H1 (cell line): ENCODE measurements at regions of chr1 and their contacts with region 1.

Region 1: GRCh38 chr1:1122078-1122811 is 6.4 kb upstream of the C1orf159 start:
- DNase-seq: peak; percentile 47 to 94
- H3K4me3 ChIP-seq: no peak overlapping the region
- H3K27ac ChIP-seq: no peak overlapping the region
- H3K4me1 ChIP-seq: peaks cover 0 to 3% (median 2%) of the 10 kb centered on the region in 4 experiments; a peak in 4 of 7 replicates
- H3K27me3 ChIP-seq: peaks cover 2 to 16% (median 13%) of the 10 kb centered on the region in 4 experiments; a peak in 6 of 7 replicates
- CTCF ChIP-seq: peak in 2 of 3 experiments; percentile 91 to 95; a peak in 3 of 4 replicates
- EP300 ChIP-seq: no peak
- POLR2A ChIP-seq: no peak
- RAD21 ChIP-seq: peak; percentile 97 to 98

Region 2: DNA sequence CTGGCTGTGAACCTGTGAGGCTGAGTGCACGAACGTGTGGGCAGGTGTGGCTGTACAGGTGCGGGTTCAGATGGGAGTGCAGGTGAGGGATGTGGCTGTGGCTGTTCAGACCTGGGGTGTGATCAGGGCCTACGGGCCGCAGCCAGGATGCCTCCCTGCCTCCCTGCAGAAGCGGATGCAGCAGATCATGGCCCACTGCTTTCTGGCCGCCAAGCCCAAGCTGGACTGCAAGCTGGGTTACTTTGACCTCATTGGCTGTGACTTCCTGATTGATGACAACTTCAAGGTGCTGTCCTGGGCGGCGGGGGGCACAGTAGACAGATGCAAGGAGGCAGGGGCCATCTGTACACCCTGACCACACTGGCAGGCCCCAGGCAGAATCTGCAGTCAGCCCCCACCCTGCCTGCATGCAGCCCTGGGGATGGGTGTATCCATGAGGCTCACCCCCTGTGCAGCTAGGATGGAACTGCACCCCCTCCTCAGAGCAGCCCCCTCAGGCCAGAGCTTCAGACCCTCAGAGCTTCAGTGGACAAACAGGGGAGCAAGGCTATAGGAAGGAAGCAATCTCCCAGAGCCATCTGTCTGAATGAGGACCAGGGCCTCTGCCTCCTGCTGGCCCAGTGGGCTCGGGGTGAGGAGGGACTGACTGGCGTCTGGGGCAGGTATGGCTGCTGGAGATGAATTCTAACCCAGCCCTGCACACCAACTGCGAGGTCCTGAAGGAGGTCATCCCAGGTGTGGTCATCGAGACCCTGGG is 74.4 kb after region 1 on chr1:
- CTCF ChIA-PET with region 1: interaction called, 14 read pairs
- POLR2A ChIA-PET with region 1: no interaction called
- DNase-seq: no peak
- H3K4me3 ChIP-seq: no peak overlapping the region
- H3K27ac ChIP-seq: no peak overlapping the region
- H3K4me1 ChIP-seq: peaks cover 0 to 4% (median under 1%) of the 10 kb centered on the region in 4 experiments; a peak in 4 of 7 replicates
- H3K27me3 ChIP-seq: peaks cover 0 to 3% (median 1%) of the 10 kb centered on the region in 4 experiments; a peak in 4 of 7 replicates
- CTCF ChIP-seq: no peak
- EP300 ChIP-seq: no peak
- POLR2A ChIP-seq: no peak
- RAD21 ChIP-seq: no peak

Region 3: GRCh38 chr1:1217621-1218523 is 95.6 kb after region 1 on chr1:
- CTCF ChIA-PET with region 1: interaction called, 28 read pairs
- POLR2A ChIA-PET with region 1: interaction called, 3 read pairs
- DNase-seq: no peak
- H3K4me3 ChIP-seq: no peak overlapping the region
- H3K27ac ChIP-seq: no peak overlapping the region
- H3K4me1 ChIP-seq: no peaks in the 10 kb centered on the region; a peak in 1 of 7 replicates
- H3K27me3 ChIP-seq: no peaks in the 10 kb centered on the region
- CTCF ChIP-seq: no peak
- EP300 ChIP-seq: no peak
- POLR2A ChIP-seq: no peak
- RAD21 ChIP-seq: no peak

Region 4: GRCh38 chr1:1225238-1225845 is 103.1 kb after region 1 on chr1:
- CTCF ChIA-PET with region 1: interaction called, 28 read pairs
- POLR2A ChIA-PET with region 1: interaction called, 3 read pairs
- DNase-seq: no peak
- H3K4me3 ChIP-seq: no peak overlapping the region
- H3K27ac ChIP-seq: no peak overlapping the region
- H3K4me1 ChIP-seq: no peaks in the 10 kb centered on the region
- H3K27me3 ChIP-seq: no peaks in the 10 kb centered on the region
- CTCF ChIP-seq: no peak
- EP300 ChIP-seq: no peak
- POLR2A ChIP-seq: no peak
- RAD21 ChIP-seq: no peak

Region 5: GRCh38 chr1:1250786-1251284 is 128.6 kb after region 1 on chr1:
- CTCF ChIA-PET with region 1: interaction called, 39 read pairs
- POLR2A ChIA-PET with region 1: no interaction called
- DNase-seq: no peak
- H3K4me3 ChIP-seq: no peak overlapping the region
- H3K27ac ChIP-seq: no peak overlapping the region
- H3K4me1 ChIP-seq: peaks cover 0 to 8% (median under 1%) of the 10 kb centered on the region in 4 experiments; a peak in 5 of 7 replicates
- H3K27me3 ChIP-seq: peaks cover 2 to 16% (median 10%) of the 10 kb centered on the region in 4 experiments; a peak in 6 of 7 replicates
- CTCF ChIP-seq: no peak
- EP300 ChIP-seq: no peak
- POLR2A ChIP-seq: no peak
- RAD21 ChIP-seq: no peak

Region 6: GRCh38 chr1:1399187-1399871 is 277.1 kb after region 1 on chr1 and contains the start of gene CCNL2:
- CTCF ChIA-PET with region 1: no interaction called
- POLR2A ChIA-PET with region 1: no interaction called
- DNase-seq: peak; percentile 94 to 99
- H3K4me3 ChIP-seq: peak within 1 kb of the TSS; percentile 93 to 95 (median 94)
- H3K27ac ChIP-seq: peak within 1 kb of the TSS; percentile 89
- H3K4me1 ChIP-seq: peaks cover 0 to 18% (median 13%) of the 10 kb centered on the region in 4 experiments; a peak in 6 of 7 replicates
- H3K27me3 ChIP-seq: no peaks in the 10 kb centered on the region
- CTCF ChIP-seq: peak in 2 of 3 experiments; percentile 59 to 60; a peak in 3 of 4 replicates
- EP300 ChIP-seq: no peak
- POLR2A ChIP-seq: peak in 1 of 2 experiments; percentile 66; a peak in 1 of 3 replicates
- RAD21 ChIP-seq: peak; percentile 6 to 24; a peak in 2 of 4 replicates
- total RNA-seq, gene CCNL2: 120 TPM in 2 replicates